CD4-positive, alpha-beta memory T cell (primary cell): ENCODE measurements at regions of chr20 and their contacts with region 1.

Region 1: GRCh38 chr20:9978397-9979004 is 56.3 kb upstream of the ANKEF1 start:
- DNase-seq: peak; percentile 56 to 66 (median 61)
- H3K4me3 ChIP-seq: no peak overlapping the region
- H3K4me3 Mint-ChIP-seq: no peak overlapping the region
- H3K27ac ChIP-seq: no peak overlapping the region
- H3K27ac Mint-ChIP-seq: no peak overlapping the region
- H3K4me1 ChIP-seq: no peaks in the 10 kb centered on the region
- H3K4me1 Mint-ChIP-seq: peaks cover 0 to 1% (median 0%) of the 10 kb centered on the region in 4 donors
- H3K27me3 ChIP-seq: no peaks in the 10 kb centered on the region
- H3K27me3 Mint-ChIP-seq: peaks cover 2 to 4% of the 10 kb centered on the region in 2 donors

Region 2: GRCh38 chr20:10012464-10012863 is 34.0 kb after region 1 on chr20:
- CTCF ChIA-PET with region 1: no interaction called
- POLR2A ChIA-PET with region 1: no interaction called
- intact Hi-C with region 1: no loop called
- DNase-seq: no peak
- H3K4me3 ChIP-seq: no peak overlapping the region
- H3K4me3 Mint-ChIP-seq: no peak overlapping the region
- H3K27ac ChIP-seq: no peak overlapping the region
- H3K27ac Mint-ChIP-seq: no peak overlapping the region
- H3K4me1 ChIP-seq: no peaks in the 10 kb centered on the region
- H3K4me1 Mint-ChIP-seq: no peaks in the 10 kb centered on the region
- H3K27me3 ChIP-seq: no peaks in the 10 kb centered on the region
- H3K27me3 Mint-ChIP-seq: peaks cover 2 to 11% of the 10 kb centered on the region in 2 donors

Region 3: GRCh38 chr20:10074513-10074912 is 96.0 kb after region 1 on chr20:
- CTCF ChIA-PET with region 1: interaction called, 10 read pairs
- POLR2A ChIA-PET with region 1: no interaction called
- intact Hi-C with region 1: no loop called
- DNase-seq: no peak
- H3K4me3 ChIP-seq: no peak overlapping the region
- H3K4me3 Mint-ChIP-seq: no peak overlapping the region
- H3K27ac ChIP-seq: no peak overlapping the region
- H3K27ac Mint-ChIP-seq: no peak overlapping the region
- H3K4me1 ChIP-seq: no peaks in the 10 kb centered on the region
- H3K4me1 Mint-ChIP-seq: no peaks in the 10 kb centered on the region
- H3K27me3 ChIP-seq: no peaks in the 10 kb centered on the region
- H3K27me3 Mint-ChIP-seq: peaks cover 16 to 20% of the 10 kb centered on the region in 2 donors

Region 4: DNA sequence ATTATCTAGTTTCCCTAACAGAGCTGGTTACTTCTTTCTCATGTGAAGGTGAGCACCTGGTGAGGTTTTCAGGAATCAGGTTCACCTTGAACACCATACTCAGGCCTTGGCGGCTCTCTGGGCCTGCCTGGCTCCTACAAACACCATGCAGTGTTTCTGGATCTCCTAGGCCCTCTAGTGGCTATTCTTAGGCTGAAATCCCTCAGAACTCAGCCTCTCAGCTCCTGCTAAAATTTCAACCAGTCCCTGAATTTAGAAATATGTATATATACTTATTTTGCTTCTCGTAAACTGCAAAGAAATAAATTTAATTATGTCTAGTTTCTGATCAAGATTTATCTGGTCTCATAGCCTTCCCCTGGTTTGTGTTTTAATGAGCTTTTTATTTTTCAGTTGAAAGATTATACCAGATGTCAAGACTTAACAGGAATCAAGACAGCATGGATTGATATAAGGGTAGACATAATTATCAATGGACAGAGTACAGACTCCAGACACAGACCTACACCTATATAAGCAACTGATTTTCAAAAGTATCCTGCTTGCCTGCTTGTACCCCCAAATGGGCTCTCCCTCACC is 112.2 kb after region 1 on chr20:
- CTCF ChIA-PET with region 1: interaction called, 180 read pairs
- POLR2A ChIA-PET with region 1: no interaction called
- intact Hi-C with region 1: loop called (anchors 1 kb)
- DNase-seq: peak in 4 of 5 donors; percentile 17 to 39 (median 22)
- H3K4me3 ChIP-seq: no peak overlapping the region
- H3K4me3 Mint-ChIP-seq: no peak overlapping the region
- H3K27ac ChIP-seq: no peak overlapping the region
- H3K27ac Mint-ChIP-seq: no peak overlapping the region
- H3K4me1 ChIP-seq: no peaks in the 10 kb centered on the region
- H3K4me1 Mint-ChIP-seq: no peaks in the 10 kb centered on the region
- H3K27me3 ChIP-seq: no peaks in the 10 kb centered on the region
- H3K27me3 Mint-ChIP-seq: peaks cover 4 to 5% of the 10 kb centered on the region in 2 donors

Region 5: DNA sequence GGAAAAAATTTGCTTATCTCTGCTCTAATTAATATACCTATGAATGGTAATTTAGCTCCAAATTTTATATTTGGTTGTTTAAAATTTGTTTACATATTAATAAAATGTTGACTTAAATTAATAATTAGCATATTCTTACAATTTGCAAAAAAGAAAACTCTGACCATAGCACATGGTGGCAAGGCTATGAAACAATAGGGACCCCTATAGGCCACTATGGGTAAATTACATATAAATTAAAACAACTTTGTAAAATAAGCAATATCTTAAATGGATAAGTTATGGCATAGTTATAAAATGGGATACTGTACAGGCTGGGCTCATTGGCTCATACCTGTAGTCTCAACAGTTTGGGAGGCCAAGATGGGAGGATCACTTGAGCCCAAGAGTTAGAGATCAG is 379.5 kb after region 1 on chr20:
- CTCF ChIA-PET with region 1: interaction called, 6 read pairs
- POLR2A ChIA-PET with region 1: no interaction called
- intact Hi-C with region 1: loop called (anchors 2 kb)
- DNase-seq: no peak
- H3K4me3 ChIP-seq: no peak overlapping the region
- H3K4me3 Mint-ChIP-seq: no peak overlapping the region
- H3K27ac ChIP-seq: no peak overlapping the region
- H3K27ac Mint-ChIP-seq: no peak overlapping the region
- H3K4me1 ChIP-seq: peaks cover 6% of the 10 kb centered on the region
- H3K4me1 Mint-ChIP-seq: peaks cover 3 to 5% (median 4%) of the 10 kb centered on the region in 4 donors
- H3K27me3 ChIP-seq: no peaks in the 10 kb centered on the region
- H3K27me3 Mint-ChIP-seq: no peaks in the 10 kb centered on the region

Region 6: DNA sequence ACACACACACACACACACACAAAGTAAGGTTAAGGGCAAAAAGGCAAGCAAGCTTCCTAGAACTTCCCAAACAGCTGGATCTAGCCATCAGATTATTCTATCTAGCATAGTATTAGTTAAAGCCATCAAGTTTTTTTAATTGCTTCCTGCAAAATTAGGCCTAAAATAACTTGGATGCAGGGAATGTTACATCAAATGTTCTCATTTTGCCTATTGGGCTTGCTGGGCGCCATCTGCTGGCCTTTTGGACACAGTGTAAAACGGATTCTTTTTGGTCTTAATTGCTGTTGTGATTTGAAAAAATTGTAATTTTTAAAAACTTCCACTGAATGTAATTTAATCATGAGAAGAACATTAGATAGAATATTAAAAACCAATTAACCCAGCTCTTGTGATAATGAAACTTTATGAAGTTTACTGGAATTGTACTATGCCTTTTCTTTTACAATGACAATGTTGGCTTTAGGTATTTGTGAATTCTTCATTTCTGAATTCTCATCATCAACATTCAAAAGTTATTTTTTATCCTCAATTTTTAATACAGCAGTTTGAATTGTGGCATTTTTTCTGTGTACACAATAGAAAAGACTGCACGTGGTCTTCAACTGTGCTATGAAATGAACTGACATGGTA is 448.7 kb after region 1 on chr20:
- CTCF ChIA-PET with region 1: interaction called, 85 read pairs
- POLR2A ChIA-PET with region 1: interaction called, 3 read pairs
- intact Hi-C with region 1: loop called (anchors 1 kb)
- DNase-seq: peak; percentile 33 to 53 (median 43)
- H3K4me3 ChIP-seq: no peak overlapping the region
- H3K4me3 Mint-ChIP-seq: no peak overlapping the region
- H3K27ac ChIP-seq: no peak overlapping the region
- H3K27ac Mint-ChIP-seq: peak overlapping the region in 3 of 7 donors; percentile 1 to 63 (median 43)
- H3K4me1 ChIP-seq: peaks cover 17% of the 10 kb centered on the region
- H3K4me1 Mint-ChIP-seq: peaks cover 27 to 41% (median 38%) of the 10 kb centered on the region in 4 donors
- H3K27me3 ChIP-seq: no peaks in the 10 kb centered on the region
- H3K27me3 Mint-ChIP-seq: no peaks in the 10 kb centered on the region

Region 7: DNA sequence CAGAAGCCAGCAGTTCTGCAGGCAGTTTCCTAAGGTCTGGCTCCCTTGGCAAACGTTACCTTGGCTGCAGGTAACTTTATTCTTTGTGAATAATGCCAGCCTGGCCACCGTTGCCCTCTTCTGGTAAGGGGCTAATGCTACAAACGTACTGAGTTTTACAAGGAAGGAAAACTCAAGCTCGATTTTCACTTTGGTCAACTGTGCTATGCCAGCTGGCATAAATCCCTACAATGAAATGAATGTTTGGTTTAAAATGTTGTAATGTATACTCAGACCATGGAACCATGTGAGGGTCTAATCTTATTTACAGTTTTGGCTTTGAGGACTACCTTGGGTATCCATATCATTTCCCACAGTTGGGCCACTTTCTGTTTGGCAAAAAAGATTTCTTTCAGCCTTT is 558.0 kb after region 1 on chr20:
- CTCF ChIA-PET with region 1: interaction called, 5 read pairs
- POLR2A ChIA-PET with region 1: no interaction called
- intact Hi-C with region 1: loop called (anchors 1 kb)
- DNase-seq: peak in 1 of 5 donors; percentile 10
- H3K4me3 ChIP-seq: no peak overlapping the region
- H3K4me3 Mint-ChIP-seq: no peak overlapping the region
- H3K27ac ChIP-seq: no peak overlapping the region
- H3K27ac Mint-ChIP-seq: no peak overlapping the region
- H3K4me1 ChIP-seq: peaks cover 18% of the 10 kb centered on the region
- H3K4me1 Mint-ChIP-seq: peaks cover 17 to 23% (median 19%) of the 10 kb centered on the region in 4 donors
- H3K27me3 ChIP-seq: no peaks in the 10 kb centered on the region
- H3K27me3 Mint-ChIP-seq: no peaks in the 10 kb centered on the region